HepG2 (cell line): ENCODE measurements at regions of chr9 and their contacts with region 1.

Region 1: GRCh38 chr9:4984621-4985385 is at the start of gene JAK2:
- DNase-seq: peak; percentile 88
- ATAC-seq: peak; percentile 94
- H3K4me3 ChIP-seq: peak within 1 kb of the TSS; percentile 67 to 85 (median 81)
- H3K27ac ChIP-seq: peak within 1 kb of the TSS; percentile 91
- H3K4me1 ChIP-seq: peaks cover 41% of the 10 kb centered on the region
- H3K27me3 ChIP-seq: no peaks in the 10 kb centered on the region
- CTCF ChIP-seq: peak; percentile 82
- EP300 ChIP-seq: no peak
- POLR2A ChIP-seq: peak; percentile 69 to 70
- RAD21 ChIP-seq: no peak; the same call in none of the 2 replicates
- total RNA-seq, gene JAK2: 4.1 and 5.8 TPM in 2 replicates

Region 2: GRCh38 chr9:3508521-3509291 is 1476.1 kb before region 1 on chr9:
- CTCF ChIA-PET with region 1: no interaction called
- POLR2A ChIA-PET with region 1: no interaction called
- in situ Hi-C with region 1: no loop called
- intact Hi-C with region 1: no loop called
- DNase-seq: no peak
- ATAC-seq: no peak
- H3K4me3 ChIP-seq: no peak overlapping the region
- H3K27ac ChIP-seq: no peak overlapping the region
- H3K4me1 ChIP-seq: peaks cover 19% of the 10 kb centered on the region
- H3K27me3 ChIP-seq: no peaks in the 10 kb centered on the region
- CTCF ChIP-seq: no peak
- EP300 ChIP-seq: no peak
- POLR2A ChIP-seq: no peak
- RAD21 ChIP-seq: no peak

Region 3: GRCh38 chr9:4604678-4605095 is 380.1 kb before region 1 on chr9:
- CTCF ChIA-PET with region 1: interaction called, 4 read pairs
- POLR2A ChIA-PET with region 1: no interaction called
- in situ Hi-C with region 1: loop called (anchors 5 kb)
- intact Hi-C with region 1: no loop called
- DNase-seq: peak; percentile 75
- ATAC-seq: peak; percentile 97
- H3K4me3 ChIP-seq: no peak overlapping the region
- H3K27ac ChIP-seq: no peak overlapping the region
- H3K4me1 ChIP-seq: no peaks in the 10 kb centered on the region
- H3K27me3 ChIP-seq: no peaks in the 10 kb centered on the region
- CTCF ChIP-seq: peak; percentile 72
- EP300 ChIP-seq: no peak
- POLR2A ChIP-seq: no peak
- RAD21 ChIP-seq: 0 out of 2 replicates have a peak, but pooled peaks have one; percentile 23

Region 4: GRCh38 chr9:4717815-4718214 is 267.0 kb before region 1 on chr9:
- CTCF ChIA-PET with region 1: no interaction called
- POLR2A ChIA-PET with region 1: no interaction called
- in situ Hi-C with region 1: no loop called
- intact Hi-C with region 1: no loop called
- DNase-seq: no peak
- ATAC-seq: no peak
- H3K4me3 ChIP-seq: no peak overlapping the region
- H3K27ac ChIP-seq: no peak overlapping the region
- H3K4me1 ChIP-seq: no peaks in the 10 kb centered on the region
- H3K27me3 ChIP-seq: no peaks in the 10 kb centered on the region
- CTCF ChIP-seq: no peak
- EP300 ChIP-seq: no peak
- POLR2A ChIP-seq: no peak
- RAD21 ChIP-seq: no peak

Region 5: GRCh38 chr9:4750023-4750673 is 234.7 kb before region 1 on chr9:
- CTCF ChIA-PET with region 1: interaction called, 3 read pairs
- POLR2A ChIA-PET with region 1: no interaction called
- in situ Hi-C with region 1: loop called (anchors 5 kb)
- intact Hi-C with region 1: no loop called
- DNase-seq: no peak
- ATAC-seq: no peak; the same call in 2 of the 3 replicates
- H3K4me3 ChIP-seq: no peak overlapping the region
- H3K27ac ChIP-seq: no peak overlapping the region
- H3K4me1 ChIP-seq: no peaks in the 10 kb centered on the region
- H3K27me3 ChIP-seq: no peaks in the 10 kb centered on the region
- CTCF ChIP-seq: peak; percentile 57
- EP300 ChIP-seq: no peak
- POLR2A ChIP-seq: no peak
- RAD21 ChIP-seq: peak; percentile 33; the same call in 1 of the 2 replicates

Region 6: GRCh38 chr9:4792572-4793458 is 192.0 kb before region 1 on chr9 and contains the start of gene RCL1:
- CTCF ChIA-PET with region 1: no interaction called
- POLR2A ChIA-PET with region 1: interaction called, 3 read pairs
- in situ Hi-C with region 1: no loop called
- intact Hi-C with region 1: loop called (anchors 1 kb)
- DNase-seq: peak; percentile 88
- ATAC-seq: peak; percentile 97
- H3K4me3 ChIP-seq: peak within 1 kb of the TSS; percentile 71 to 87 (median 73)
- H3K27ac ChIP-seq: peak within 1 kb of the TSS; percentile 88
- H3K4me1 ChIP-seq: peaks cover 48% of the 10 kb centered on the region
- H3K27me3 ChIP-seq: no peaks in the 10 kb centered on the region; a peak in 1 of 5 replicates
- CTCF ChIP-seq: no peak
- EP300 ChIP-seq: peak in 1 of 2 experiments; percentile 65; a peak in 1 of 4 replicates
- POLR2A ChIP-seq: peak; percentile 70 to 72
- RAD21 ChIP-seq: peak; percentile 13; the same call in 1 of the 2 replicates
- total RNA-seq, gene RCL1: 31.6 and 33.9 TPM in 2 replicates

Region 7: GRCh38 chr9:4862506-4863250 is 122.1 kb before region 1 on chr9:
- CTCF ChIA-PET with region 1: no interaction called
- POLR2A ChIA-PET with region 1: no interaction called
- in situ Hi-C with region 1: no loop called
- intact Hi-C with region 1: loop called (anchors 5 kb)
- DNase-seq: no peak
- ATAC-seq: peak; percentile 23
- H3K4me3 ChIP-seq: no peak overlapping the region
- H3K27ac ChIP-seq: peak overlapping the region; percentile 53
- H3K4me1 ChIP-seq: peaks cover 29% of the 10 kb centered on the region
- H3K27me3 ChIP-seq: no peaks in the 10 kb centered on the region
- CTCF ChIP-seq: no peak
- EP300 ChIP-seq: no peak
- POLR2A ChIP-seq: no peak
- RAD21 ChIP-seq: no peak

Region 8: DNA sequence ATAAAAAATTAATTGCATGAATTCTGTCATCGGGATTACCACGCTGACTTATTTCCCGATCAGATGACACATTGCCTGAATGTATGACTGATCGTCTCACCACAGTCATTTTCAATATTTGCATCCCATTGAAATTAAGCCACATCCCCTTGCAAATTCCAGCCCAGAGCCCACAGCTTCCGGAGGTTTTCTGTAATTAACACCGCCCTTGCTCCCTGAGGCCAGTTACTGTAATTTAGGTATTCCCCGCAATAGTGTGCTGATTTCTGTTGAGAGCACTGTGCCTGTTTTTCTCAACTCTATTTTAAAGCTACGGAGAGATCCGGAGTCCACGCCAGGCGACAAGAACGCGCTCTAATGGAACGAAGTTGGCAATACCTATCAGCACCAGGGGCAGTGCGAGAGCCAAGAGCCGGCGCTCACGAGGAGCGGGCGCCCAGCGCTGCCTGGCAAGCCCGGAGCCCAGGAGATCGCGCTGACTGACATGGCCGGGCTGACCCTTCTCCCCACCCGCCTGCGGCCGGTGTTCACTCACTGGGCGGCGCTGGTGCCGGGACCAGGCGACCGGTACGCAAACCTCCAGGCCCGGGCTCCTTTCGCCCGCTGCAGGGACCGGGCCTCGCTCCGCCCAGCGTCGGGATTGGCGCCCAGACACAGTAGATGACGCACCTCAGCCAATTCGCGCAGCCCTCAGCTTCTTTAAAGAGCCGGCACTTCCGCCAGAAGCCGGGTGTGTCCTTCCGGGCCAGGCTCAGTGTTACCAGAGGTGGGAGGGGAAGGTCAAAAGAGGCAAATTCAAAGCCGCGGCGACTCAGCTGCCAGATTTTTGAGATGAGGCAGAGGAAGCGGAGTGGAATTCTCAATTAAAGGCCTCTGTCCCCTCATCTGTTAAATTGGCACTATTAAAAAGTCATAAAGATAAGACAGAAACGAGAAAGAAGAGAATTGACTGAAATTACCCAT is 452.7 kb after region 1 on chr9 and contains the start of gene PLGRKT:
- CTCF ChIA-PET with region 1: no interaction called
- POLR2A ChIA-PET with region 1: no interaction called
- in situ Hi-C with region 1: loop called (anchors 25 kb)
- intact Hi-C with region 1: loop called (anchors 5 kb)
- DNase-seq: peak; percentile 93
- ATAC-seq: peak; percentile 99
- H3K4me3 ChIP-seq: peak within 1 kb of the TSS; percentile 72 to 81 (median 78)
- H3K27ac ChIP-seq: peak within 1 kb of the TSS; percentile 86
- H3K4me1 ChIP-seq: peaks cover 29% of the 10 kb centered on the region
- H3K27me3 ChIP-seq: no peaks in the 10 kb centered on the region; a peak in 1 of 5 replicates
- CTCF ChIP-seq: peak; percentile 68
- EP300 ChIP-seq: 0 out of 4 replicates have a peak, but pooled peaks of 1 of the 2 experiments have one; percentile 14
- POLR2A ChIP-seq: peak; percentile 87 to 88
- RAD21 ChIP-seq: 0 out of 2 replicates have a peak, but pooled peaks have one; percentile 39
- total RNA-seq, gene PLGRKT: 15.8 and 20.2 TPM in 2 replicates